PC-3 (cell line): ENCODE measurements at regions of chr20 and their contacts with region 1.

Region 1: DNA sequence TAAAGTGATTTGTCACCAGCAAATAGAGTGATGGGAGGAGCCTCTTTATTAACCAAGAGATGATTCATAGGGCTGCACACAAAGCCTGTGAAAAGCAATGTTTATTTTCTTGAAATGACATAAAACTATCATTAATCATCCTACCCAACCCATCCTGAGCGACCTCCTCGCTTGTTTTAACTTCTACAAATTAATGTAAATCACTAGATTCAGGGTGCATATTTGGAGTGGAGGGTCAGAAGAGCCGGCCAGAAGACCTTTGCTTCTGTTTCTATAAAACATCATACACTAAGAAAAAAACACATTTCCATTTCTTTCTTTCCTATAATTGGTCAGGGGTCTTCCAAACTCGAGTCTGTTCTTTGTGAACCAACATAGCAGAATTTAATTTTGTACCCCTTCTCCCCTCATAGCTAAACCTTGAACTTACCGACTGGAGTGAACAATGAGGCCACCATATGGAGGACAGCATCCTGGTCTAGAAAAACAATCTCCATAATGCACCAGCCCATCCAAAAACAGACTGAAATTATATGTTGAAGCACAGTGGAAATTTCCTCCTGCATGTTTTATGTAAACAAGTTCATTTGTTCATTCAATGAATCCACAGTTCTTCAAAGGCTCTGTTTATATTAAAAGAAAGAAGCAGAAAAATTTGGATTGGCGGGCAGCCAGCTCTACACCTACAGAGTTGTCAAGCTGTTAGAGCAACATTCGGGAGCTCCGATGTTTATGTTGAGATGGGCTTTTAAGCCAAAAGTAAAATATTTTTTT is 395.1 kb upstream of the SULF2 start:
- DNase-seq: peak; percentile 93
- ATAC-seq: peak; percentile 94
- H3K4me3 ChIP-seq: peak overlapping the region; percentile 45; the same call in 1 of the 2 replicates
- H3K27ac ChIP-seq: peak overlapping the region; percentile 97
- H3K4me1 ChIP-seq: peaks cover 22% of the 10 kb centered on the region
- H3K27me3 ChIP-seq: no peaks in the 10 kb centered on the region
- CTCF ChIP-seq: no peak

Region 2: DNA sequence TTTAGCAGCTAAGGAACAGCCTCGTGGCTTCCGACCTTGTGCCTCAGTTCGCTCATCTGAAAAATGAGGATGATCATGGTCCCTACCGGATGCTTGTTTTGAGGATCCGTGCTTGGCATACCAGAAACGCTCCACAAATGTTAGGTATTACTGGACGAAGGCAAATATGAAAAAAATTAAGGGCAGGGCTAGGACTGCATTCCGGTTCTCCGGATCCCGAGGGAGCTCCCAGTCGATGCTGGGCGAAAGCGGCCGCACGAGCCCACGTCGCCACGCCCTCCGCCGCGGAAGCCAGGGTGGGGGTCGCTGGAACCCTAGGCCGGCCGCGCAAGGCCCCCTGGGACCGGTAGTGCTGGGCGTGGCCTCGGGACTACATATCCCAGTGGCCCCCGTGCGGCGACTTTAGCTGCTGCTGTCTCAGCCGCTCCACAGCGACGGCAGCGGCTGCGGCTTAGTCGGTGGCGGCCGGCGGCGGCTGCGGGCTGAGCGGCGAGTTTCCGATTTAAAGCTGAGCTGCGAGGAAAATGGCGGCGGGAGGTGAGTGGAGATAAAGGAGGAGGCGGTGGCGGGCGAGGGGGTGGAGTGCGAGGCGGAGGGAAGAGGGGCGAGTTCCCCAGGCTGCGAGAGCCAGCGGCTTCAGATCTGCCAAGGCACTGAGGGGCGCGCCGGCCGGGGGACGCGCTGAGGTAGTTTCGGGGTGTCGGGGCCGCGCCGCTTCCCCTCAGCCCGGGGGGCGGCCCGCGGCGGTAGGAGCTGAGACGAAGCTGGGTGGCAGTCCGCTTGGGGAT is 678.7 kb before region 1 on chr20 and contains the start of gene NCOA3:
- CTCF ChIA-PET with region 1: no interaction called
- POLR2A ChIA-PET with region 1: no interaction called
- intact Hi-C with region 1: no loop called
- DNase-seq: peak; percentile 97
- ATAC-seq: peak; percentile 94
- H3K4me3 ChIP-seq: peak within 1 kb of the TSS; percentile 72
- H3K27ac ChIP-seq: peak within 1 kb of the TSS; percentile 65
- H3K4me1 ChIP-seq: peaks cover 41% of the 10 kb centered on the region
- H3K27me3 ChIP-seq: no peaks in the 10 kb centered on the region
- CTCF ChIP-seq: peak; percentile 32
- total RNA-seq, gene NCOA3: 27.8 and 31.1 TPM in 2 replicates

Region 3: DNA sequence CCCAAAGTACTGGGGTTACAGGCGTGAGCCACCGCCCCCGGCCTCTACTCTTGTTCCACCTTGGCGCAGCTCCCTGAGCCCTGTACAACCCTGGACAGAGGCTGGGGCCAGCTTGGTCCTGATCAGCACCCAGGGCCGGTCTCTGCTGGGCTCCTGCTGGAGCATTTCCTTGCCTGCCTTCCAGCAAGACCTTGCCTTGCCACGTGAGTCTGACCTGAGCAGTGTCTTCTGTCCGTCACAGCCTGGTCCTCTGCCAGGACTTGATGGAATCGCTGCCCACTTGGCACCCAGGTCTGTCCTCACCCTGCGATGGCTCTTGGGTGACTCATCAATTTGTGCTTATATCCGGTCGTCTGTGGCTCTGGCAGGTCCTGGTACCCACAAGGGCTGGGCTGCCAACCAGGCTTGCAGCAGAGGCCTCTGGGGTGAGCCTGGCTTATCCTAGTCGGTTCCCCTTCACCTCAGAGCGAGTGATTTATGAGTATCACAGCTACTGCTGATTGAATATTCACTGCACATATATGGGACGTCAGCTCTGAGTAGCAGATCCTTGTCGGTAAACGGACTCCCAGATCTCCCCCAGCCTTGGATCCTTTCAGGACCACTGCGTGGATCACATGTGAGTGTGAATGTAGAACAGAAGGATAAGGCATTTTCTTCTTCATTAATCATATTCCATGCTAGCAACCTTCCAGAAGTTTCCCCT is 385.0 kb before region 1 on chr20:
- CTCF ChIA-PET with region 1: no interaction called
- POLR2A ChIA-PET with region 1: no interaction called
- intact Hi-C with region 1: loop called (anchors 1 kb)
- DNase-seq: peak; percentile 99
- ATAC-seq: peak; percentile 73
- H3K4me3 ChIP-seq: no peak overlapping the region
- H3K27ac ChIP-seq: peak overlapping the region; percentile 92
- H3K4me1 ChIP-seq: peaks cover 54% of the 10 kb centered on the region
- H3K27me3 ChIP-seq: no peaks in the 10 kb centered on the region
- CTCF ChIP-seq: no peak

Region 4: DNA sequence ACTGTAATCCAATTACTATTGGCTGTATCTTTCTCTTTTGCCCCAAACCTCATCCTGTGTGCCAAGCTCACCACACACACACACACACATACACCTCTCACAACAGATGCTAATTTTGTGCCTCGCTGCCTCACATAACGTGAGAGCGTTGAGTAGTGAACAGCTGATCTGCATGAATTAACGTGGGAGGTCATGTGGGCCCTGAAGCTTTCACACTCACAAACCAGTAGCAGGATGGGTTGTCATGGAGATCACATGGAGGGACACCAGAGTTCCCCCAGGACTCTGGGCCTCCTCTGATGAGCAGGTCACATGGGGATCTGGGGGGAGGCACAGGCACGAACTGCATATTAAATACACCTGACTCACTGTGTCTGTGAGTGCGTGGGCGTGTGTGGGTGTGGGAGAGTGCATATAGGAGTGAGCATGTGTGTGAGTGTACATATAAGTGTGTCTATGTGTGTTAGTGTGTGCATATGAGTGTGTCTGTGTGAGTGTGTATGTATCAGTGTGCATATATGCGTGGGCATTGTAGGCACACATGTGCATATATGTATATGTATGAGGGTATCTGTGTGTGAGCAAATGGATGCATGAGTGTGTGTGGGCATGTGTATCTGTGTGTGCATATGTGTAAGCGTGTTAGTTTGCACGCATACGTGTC is 332.4 kb before region 1 on chr20:
- CTCF ChIA-PET with region 1: no interaction called
- POLR2A ChIA-PET with region 1: no interaction called
- intact Hi-C with region 1: loop called (anchors 2 kb)
- DNase-seq: peak; percentile 38
- ATAC-seq: peak; percentile 10
- H3K4me3 ChIP-seq: no peak overlapping the region
- H3K27ac ChIP-seq: peak overlapping the region; percentile 83
- H3K4me1 ChIP-seq: peaks cover 50% of the 10 kb centered on the region
- H3K27me3 ChIP-seq: no peaks in the 10 kb centered on the region
- CTCF ChIP-seq: no peak

Region 5: GRCh38 chr20:47973519-47974233 is 206.7 kb before region 1 on chr20:
- CTCF ChIA-PET with region 1: no interaction called
- POLR2A ChIA-PET with region 1: no interaction called
- intact Hi-C with region 1: loop called (anchors 5 kb)
- DNase-seq: peak; percentile 77
- ATAC-seq: peak; percentile 80
- H3K4me3 ChIP-seq: no peak overlapping the region
- H3K27ac ChIP-seq: peak overlapping the region; percentile 89
- H3K4me1 ChIP-seq: peaks cover 41% of the 10 kb centered on the region
- H3K27me3 ChIP-seq: no peaks in the 10 kb centered on the region
- CTCF ChIP-seq: no peak

Region 6: DNA sequence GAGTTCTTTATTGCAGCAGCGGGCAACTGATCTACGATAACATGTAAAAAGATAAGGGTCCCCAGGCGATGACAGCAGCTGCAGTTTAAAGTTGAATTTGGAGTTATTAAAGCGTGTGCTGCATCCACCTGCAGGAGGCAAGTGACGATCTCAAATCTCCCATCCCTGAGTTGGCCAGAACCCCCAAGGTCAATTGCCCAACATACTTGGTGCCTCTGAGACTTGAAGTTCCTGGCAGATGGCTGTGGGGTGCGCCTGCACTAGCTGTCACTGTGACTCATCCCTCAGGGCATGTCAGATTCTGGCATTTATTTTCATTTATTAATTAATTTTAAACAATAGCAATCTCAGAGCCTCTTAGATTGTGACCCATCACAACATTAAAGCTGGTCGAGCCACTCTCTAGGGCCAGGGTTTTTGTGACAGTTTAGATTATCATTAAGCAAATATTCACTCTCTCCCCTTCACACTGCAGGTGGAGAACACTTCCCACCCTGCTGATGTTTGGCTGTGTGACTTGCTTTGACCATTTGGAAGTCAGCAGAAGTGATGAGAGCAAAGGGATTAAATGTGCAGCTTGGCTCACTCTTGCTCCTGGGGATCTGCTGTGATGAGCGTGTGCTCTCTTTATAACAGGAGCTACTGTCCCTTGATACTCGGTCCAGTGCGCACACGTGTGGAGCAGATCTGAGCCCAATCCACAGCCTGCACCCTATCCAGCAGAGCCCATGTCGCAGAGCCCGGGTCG is 104.5 kb before region 1 on chr20:
- CTCF ChIA-PET with region 1: no interaction called
- POLR2A ChIA-PET with region 1: no interaction called
- intact Hi-C with region 1: no loop called
- DNase-seq: no peak
- ATAC-seq: peak; percentile 24; the same call in 1 of the 2 replicates
- H3K4me3 ChIP-seq: no peak overlapping the region
- H3K27ac ChIP-seq: no peak overlapping the region
- H3K4me1 ChIP-seq: no peaks in the 10 kb centered on the region
- H3K27me3 ChIP-seq: no peaks in the 10 kb centered on the region
- CTCF ChIP-seq: no peak

Region 7: DNA sequence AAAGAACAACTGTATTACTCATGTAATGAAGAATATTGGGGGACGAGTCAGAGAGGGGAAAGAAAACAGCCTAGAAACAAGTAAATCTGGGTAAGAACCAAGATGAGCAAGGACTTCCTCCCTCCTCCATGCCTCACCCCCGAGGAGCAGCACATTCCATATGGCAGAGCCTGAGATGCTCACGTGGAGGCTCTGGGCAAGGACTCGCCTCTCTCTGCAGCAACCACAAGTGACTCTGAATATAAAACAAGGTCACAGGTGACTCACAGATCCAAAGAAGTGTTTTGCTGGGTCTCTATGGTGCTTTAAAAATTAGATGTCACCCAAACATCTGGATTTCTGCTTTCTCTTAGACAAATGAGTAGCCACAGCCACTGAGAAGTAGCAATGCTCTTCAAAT is 58.0 kb after region 1 on chr20:
- CTCF ChIA-PET with region 1: no interaction called
- POLR2A ChIA-PET with region 1: no interaction called
- intact Hi-C with region 1: no loop called
- DNase-seq: peak; percentile 59
- ATAC-seq: peak; percentile 79
- H3K4me3 ChIP-seq: no peak overlapping the region
- H3K27ac ChIP-seq: no peak overlapping the region
- H3K4me1 ChIP-seq: peaks cover 5% of the 10 kb centered on the region; the same call in 1 of the 2 replicates
- H3K27me3 ChIP-seq: peaks cover 12% of the 10 kb centered on the region
- CTCF ChIP-seq: no peak